H1 (cell line): ENCODE measurements at regions of chr10 and their contacts with region 1.

Region 1: GRCh38 chr10:13404305-13404759 is 56.2 kb upstream of the SEPHS1 start:
- DNase-seq: no peak
- H3K4me3 ChIP-seq: no peak overlapping the region
- H3K27ac ChIP-seq: no peak overlapping the region
- H3K4me1 ChIP-seq: peaks cover 0 to 7% (median under 1%) of the 10 kb centered on the region in 4 experiments; a peak in 3 of 7 replicates
- H3K27me3 ChIP-seq: no peaks in the 10 kb centered on the region
- CTCF ChIP-seq: no peak
- EP300 ChIP-seq: no peak
- POLR2A ChIP-seq: no peak
- RAD21 ChIP-seq: no peak

Region 2: GRCh38 chr10:13382703-13383398 is 21.5 kb before region 1 on chr10:
- CTCF ChIA-PET with region 1: interaction called, 11 read pairs
- POLR2A ChIA-PET with region 1: interaction called, 5 read pairs
- DNase-seq: no peak
- H3K4me3 ChIP-seq: peak overlapping the region; percentile 29 to 60 (median 50)
- H3K27ac ChIP-seq: no peak overlapping the region
- H3K4me1 ChIP-seq: peaks cover 0 to 4% (median under 1%) of the 10 kb centered on the region in 4 experiments; a peak in 4 of 7 replicates
- H3K27me3 ChIP-seq: peaks cover 0 to 10% (median 8%) of the 10 kb centered on the region in 4 experiments; a peak in 3 of 7 replicates
- CTCF ChIP-seq: no peak
- EP300 ChIP-seq: no peak
- POLR2A ChIP-seq: no peak
- RAD21 ChIP-seq: no peak